Tibial artery (tissue), 4 donors: ENCODE measurements at regions of chrX and their contacts with region 1.

Region 1: GRCh38 chrX:68834371-68835103 is 5.7 kb downstream of the EFNB1 start:
- DNase-seq: no peak
- H3K4me3 ChIP-seq: no peak overlapping the region
- H3K27ac ChIP-seq: no peak overlapping the region
- H3K4me1 ChIP-seq: peaks cover 0 to 23% (median 8%) of the 10 kb centered on the region in 4 donors
- H3K27me3 ChIP-seq: no peaks in the 10 kb centered on the region
- CTCF ChIP-seq: no peak

Region 2: GRCh38 chrX:69216911-69217310 is 382.4 kb after region 1 on chrX:
- intact Hi-C with region 1: loop called (anchors 5 kb)
- DNase-seq: peak in 1 of 2 donors; percentile 66
- H3K4me3 ChIP-seq: no peak overlapping the region
- H3K27ac ChIP-seq: peak overlapping the region in 1 of 2 donors; percentile 51
- H3K4me1 ChIP-seq: peaks cover 0 to 14% (median 4%) of the 10 kb centered on the region in 4 donors
- H3K27me3 ChIP-seq: no peaks in the 10 kb centered on the region
- CTCF ChIP-seq: no peak